Aorta (tissue), 5 donors: ENCODE measurements at regions of chr3 and their contacts with region 1.

Region 1: DNA sequence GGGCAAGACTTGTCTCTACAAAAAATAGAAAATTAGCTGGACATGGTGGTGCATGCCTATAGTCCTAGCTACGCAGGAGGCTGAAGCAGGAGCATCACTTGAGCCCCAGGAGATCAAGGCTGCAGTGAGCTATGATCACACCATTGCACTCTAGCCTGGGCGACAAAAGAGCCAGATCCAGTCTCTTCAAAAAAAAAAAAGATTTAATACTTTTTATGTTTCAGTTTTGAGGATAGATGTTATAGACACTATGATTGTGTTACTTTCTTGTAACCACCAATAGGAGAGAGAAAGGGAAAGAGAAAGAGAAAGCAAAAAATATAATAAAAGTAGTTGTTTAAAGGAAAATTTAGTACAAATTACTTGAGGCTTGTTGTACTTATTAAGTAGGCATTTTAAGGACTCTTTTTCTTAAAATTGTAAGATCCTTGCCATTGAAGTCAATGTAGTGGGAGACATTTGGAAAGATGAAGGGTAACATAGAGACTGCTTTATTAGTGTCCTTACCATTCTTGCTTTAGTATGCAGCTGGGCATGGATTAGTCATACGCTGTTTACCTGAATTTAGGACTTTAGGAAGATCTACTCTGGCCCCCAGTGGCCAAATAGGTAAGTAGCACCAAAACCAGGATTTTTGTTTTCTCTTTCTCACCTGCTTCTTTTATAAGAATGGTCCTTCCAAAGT is 35.1 kb upstream of the ZDHHC23 start:
- DNase-seq: no peak
- ATAC-seq: no peak
- H3K4me3 ChIP-seq: no peak overlapping the region
- H3K27ac ChIP-seq: no peak overlapping the region
- H3K4me1 ChIP-seq: no peaks in the 10 kb centered on the region
- H3K27me3 ChIP-seq: no peaks in the 10 kb centered on the region

Region 2: GRCh38 chr3:113736548-113737089 is 176.1 kb before region 1 on chr3:
- intact Hi-C with region 1: loop called in 1 of 2 experiments (anchors 10 kb)
- DNase-seq: no peak
- ATAC-seq: peak; percentile 89
- H3K4me3 ChIP-seq: no peak overlapping the region
- H3K27ac ChIP-seq: no peak overlapping the region
- H3K4me1 ChIP-seq: no peaks in the 10 kb centered on the region
- H3K27me3 ChIP-seq: no peaks in the 10 kb centered on the region